Posterior vena cava (tissue), 2 donors: ENCODE measurements at regions of chr4 and their contacts with region 1.

Region 1: GRCh38 chr4:57580710-57581599 is 470.8 kb upstream of the IGFBP7 start:
- DNase-seq: no peak

Region 2: DNA sequence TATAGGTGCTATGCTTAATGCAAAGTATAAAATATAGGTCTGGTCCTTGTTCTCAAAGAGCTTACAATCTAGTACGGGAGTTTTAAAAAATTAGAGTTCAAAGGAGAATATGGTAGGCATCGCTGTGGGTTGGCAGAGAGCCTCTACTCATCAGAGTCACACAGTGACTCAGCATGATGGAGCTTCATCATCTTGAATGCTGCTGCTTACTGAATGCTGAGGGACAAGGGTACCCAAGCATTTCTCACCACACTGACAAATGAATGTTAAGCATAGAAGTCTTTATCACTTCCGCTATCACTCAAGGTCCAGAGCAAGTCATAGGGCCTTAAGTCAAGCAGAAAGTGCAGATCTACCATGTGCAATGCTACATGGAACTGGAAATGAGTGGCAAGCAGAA is 202.2 kb before region 1 on chr4:
- intact Hi-C with region 1: no loop called
- DNase-seq: no peak

Region 3: DNA sequence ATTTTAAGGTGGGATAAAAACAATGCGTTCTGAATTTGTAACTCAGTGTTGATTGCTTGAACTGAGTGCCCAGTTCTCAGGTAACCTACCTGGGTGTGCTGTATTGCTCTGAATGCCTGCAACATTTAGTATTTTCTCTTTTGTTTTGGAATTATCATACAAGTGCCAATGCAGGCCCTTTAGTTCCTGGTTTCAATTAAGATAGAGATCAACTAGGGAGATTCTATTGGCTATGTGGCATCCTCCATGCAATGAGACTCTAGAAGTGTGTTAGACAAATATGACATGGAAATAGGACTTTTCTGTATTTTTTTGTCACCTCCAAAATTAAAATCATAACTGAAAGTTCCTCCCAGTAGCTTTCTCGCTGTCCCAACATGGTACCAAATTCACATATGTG is 32.1 kb before region 1 on chr4:
- intact Hi-C with region 1: loop called in 1 of 2 experiments (anchors 1 kb)
- DNase-seq: no peak

Region 4: DNA sequence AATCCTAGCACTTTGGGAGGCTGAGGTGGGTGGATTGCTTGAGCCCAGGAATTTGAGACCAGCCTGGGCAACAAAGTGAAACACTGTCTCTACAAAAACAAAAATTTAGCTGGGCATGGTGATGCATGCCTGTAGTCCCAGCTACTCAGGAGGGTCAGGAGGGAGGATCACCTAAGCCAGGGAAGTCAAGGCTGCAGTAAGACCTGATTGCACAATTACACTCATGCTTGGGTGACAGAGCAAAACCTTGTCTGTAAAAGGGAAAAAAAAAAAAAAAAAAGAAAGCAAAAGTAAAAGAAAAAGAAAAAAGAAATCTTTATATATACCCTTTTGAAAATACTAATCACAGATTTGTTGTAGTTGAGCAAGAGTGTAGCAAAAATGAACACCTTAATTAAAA is 330.3 kb after region 1 on chr4:
- intact Hi-C with region 1: no loop called
- DNase-seq: no peak